CD4-positive, alpha-beta memory T cell (primary cell): ENCODE measurements at regions of chr1 and their contacts with region 1.

Region 1: GRCh38 chr1:225977937-225978748 is 21.0 kb downstream of the SDE2 start:
- DNase-seq: no peak
- H3K4me3 ChIP-seq: no peak overlapping the region
- H3K4me3 Mint-ChIP-seq: no peak overlapping the region
- H3K27ac ChIP-seq: no peak overlapping the region
- H3K27ac Mint-ChIP-seq: peak overlapping the region in 1 of 7 donors; percentile 43
- H3K4me1 ChIP-seq: no peaks in the 10 kb centered on the region
- H3K4me1 Mint-ChIP-seq: peaks cover 0 to 6% (median 5%) of the 10 kb centered on the region in 4 donors
- H3K27me3 ChIP-seq: no peaks in the 10 kb centered on the region
- H3K27me3 Mint-ChIP-seq: no peaks in the 10 kb centered on the region

Region 2: GRCh38 chr1:225554216-225554812 is 423.8 kb before region 1 on chr1:
- CTCF ChIA-PET with region 1: interaction called, 15 read pairs
- POLR2A ChIA-PET with region 1: no interaction called
- intact Hi-C with region 1: loop called (anchors 1 kb)
- DNase-seq: peak in 4 of 5 donors; percentile 15 to 28 (median 22)
- H3K4me3 ChIP-seq: no peak overlapping the region
- H3K4me3 Mint-ChIP-seq: no peak overlapping the region
- H3K27ac ChIP-seq: no peak overlapping the region
- H3K27ac Mint-ChIP-seq: no peak overlapping the region
- H3K4me1 ChIP-seq: no peaks in the 10 kb centered on the region
- H3K4me1 Mint-ChIP-seq: no peaks in the 10 kb centered on the region
- H3K27me3 ChIP-seq: no peaks in the 10 kb centered on the region
- H3K27me3 Mint-ChIP-seq: peaks cover 4 to 8% of the 10 kb centered on the region in 2 donors

Region 3: DNA sequence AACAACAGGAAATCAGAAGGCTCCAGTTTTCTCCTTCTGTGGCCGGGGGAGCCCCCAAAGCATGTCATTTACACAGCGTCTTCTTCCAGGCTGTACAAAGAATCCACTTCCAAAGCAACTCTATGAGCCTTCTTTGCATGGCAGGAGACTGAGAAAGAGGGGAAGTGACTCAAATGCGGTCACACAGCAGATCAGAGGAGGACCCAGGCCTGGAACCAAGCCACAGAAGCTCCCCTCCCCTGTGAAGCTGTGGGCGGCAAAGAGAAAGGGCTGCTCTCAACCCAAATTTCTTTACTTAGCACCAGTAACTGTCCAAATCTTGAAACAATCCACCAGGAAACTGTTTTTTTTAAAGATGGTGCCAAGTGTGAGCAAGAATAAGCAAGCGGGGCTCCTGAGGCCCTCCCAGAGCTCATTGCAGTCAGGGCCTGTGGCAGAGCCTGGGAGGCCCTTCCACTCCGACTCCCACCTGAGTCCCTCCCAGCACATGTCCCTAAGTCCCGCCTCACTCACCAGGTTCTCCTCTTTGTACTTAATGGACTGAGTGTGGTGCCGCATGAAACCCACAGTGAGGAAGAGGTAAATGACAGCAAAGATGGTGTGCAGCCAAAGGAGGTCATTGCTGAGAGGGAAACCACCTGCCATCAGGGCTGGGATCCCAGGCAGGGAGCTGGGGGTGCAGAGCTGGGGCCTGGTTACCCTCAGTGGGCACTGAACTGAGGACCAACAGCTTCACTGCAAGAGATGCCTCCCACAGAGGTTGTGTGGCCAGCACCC is 111.9 kb before region 1 on chr1:
- CTCF ChIA-PET with region 1: no interaction called
- POLR2A ChIA-PET with region 1: no interaction called
- intact Hi-C with region 1: loop called (anchors 5 kb)
- DNase-seq: peak; percentile 69 to 89 (median 73)
- H3K4me3 ChIP-seq: no peak overlapping the region
- H3K4me3 Mint-ChIP-seq: peak overlapping the region in 7 of 8 donors; percentile 58 to 85 (median 76)
- H3K27ac ChIP-seq: peak overlapping the region; percentile 52
- H3K27ac Mint-ChIP-seq: peak overlapping the region; percentile 85 to 95 (median 90)
- H3K4me1 ChIP-seq: peaks cover 42% of the 10 kb centered on the region
- H3K4me1 Mint-ChIP-seq: peaks cover 31 to 60% (median 44%) of the 10 kb centered on the region in 4 donors
- H3K27me3 ChIP-seq: no peaks in the 10 kb centered on the region
- H3K27me3 Mint-ChIP-seq: no peaks in the 10 kb centered on the region

Region 4: GRCh38 chr1:225962440-225962975 is 15.6 kb before region 1 on chr1:
- CTCF ChIA-PET with region 1: interaction called, 21 read pairs
- POLR2A ChIA-PET with region 1: no interaction called
- intact Hi-C with region 1: no loop called
- DNase-seq: peak in 4 of 5 donors; percentile 31 to 45 (median 38)
- H3K4me3 ChIP-seq: no peak overlapping the region
- H3K4me3 Mint-ChIP-seq: no peak overlapping the region
- H3K27ac ChIP-seq: no peak overlapping the region
- H3K27ac Mint-ChIP-seq: no peak overlapping the region
- H3K4me1 ChIP-seq: peaks cover 4% of the 10 kb centered on the region
- H3K4me1 Mint-ChIP-seq: peaks cover 0 to 5% (median 3%) of the 10 kb centered on the region in 4 donors
- H3K27me3 ChIP-seq: no peaks in the 10 kb centered on the region
- H3K27me3 Mint-ChIP-seq: peaks cover 0 to 2% of the 10 kb centered on the region in 2 donors